Natural killer cell (primary cell): ENCODE measurements at regions of chr15 and their contacts with region 1.

Region 1: GRCh38 chr15:53009093-53009492 is 219.0 kb upstream of the ONECUT1 start:
- DNase-seq: no peak
- ATAC-seq: no peak
- H3K4me3 ChIP-seq: no peak overlapping the region
- H3K4me3 Mint-ChIP-seq: no peak overlapping the region
- H3K27ac ChIP-seq: no peak overlapping the region
- H3K27ac Mint-ChIP-seq: no peak overlapping the region
- H3K4me1 ChIP-seq: no peaks in the 10 kb centered on the region
- H3K4me1 Mint-ChIP-seq: no peaks in the 10 kb centered on the region
- H3K27me3 ChIP-seq: no peaks in the 10 kb centered on the region
- H3K27me3 Mint-ChIP-seq: peaks cover 0 to 4% of the 10 kb centered on the region in 2 donors
- CTCF ChIP-seq: no peak

Region 2: DNA sequence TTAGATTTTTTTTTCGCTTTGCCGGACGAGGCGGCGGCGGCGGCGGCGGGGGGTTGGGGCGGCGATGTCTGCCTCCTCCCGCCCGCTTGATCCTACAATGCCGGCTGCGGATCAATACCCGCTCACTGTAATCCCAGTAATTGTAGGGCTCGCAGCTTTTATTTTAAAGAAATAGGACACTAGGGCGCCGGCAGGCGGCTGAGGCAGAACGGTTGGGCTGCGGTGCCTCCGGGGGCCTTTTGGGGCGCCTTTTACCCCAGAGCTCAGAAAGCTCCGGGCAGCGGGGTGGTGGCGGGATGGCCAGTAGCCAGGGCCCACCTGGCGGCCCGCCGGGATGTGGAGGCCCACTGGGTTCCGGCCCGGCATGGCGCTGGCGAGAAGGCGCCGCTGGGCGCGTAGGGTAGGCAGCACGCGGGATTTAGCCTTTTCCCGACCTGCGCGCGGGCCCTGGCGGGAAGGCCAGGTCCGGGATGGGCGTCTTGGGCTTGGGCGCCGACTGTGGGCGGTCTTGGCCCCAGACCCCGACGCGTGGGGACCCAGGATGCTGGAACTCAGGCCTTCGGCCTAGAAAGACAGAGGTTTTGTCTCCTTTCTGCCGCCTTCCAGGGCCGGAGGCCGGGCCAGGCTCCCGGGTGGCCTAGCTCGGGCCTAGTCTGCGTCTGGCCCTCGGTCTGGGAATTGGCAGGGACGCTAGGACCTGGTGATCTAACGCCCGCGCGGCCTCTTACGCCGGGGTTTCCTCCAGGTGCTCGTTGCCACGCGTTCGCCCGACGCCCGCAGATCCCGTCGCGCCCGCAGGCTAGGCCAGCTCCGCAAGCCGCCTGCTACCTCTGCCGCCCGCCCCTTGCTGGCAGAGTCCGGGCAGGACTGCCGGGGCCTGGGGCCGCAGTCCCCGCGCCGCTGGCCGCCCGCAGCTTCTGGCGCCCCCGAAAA is 203.5 kb before region 1 on chr15:
- intact Hi-C with region 1: no loop called
- DNase-seq: peak in 1 of 2 donors; percentile 25
- ATAC-seq: peak in 1 of 3 donors; percentile 46
- H3K4me3 ChIP-seq: no peak overlapping the region
- H3K4me3 Mint-ChIP-seq: peak overlapping the region; percentile 75
- H3K27ac ChIP-seq: no peak overlapping the region
- H3K27ac Mint-ChIP-seq: no peak overlapping the region
- H3K4me1 ChIP-seq: peaks cover 30% of the 10 kb centered on the region
- H3K4me1 Mint-ChIP-seq: peaks cover 12 to 13% of the 10 kb centered on the region in 2 donors
- H3K27me3 ChIP-seq: peaks cover 70% of the 10 kb centered on the region
- H3K27me3 Mint-ChIP-seq: peaks cover 61 to 81% of the 10 kb centered on the region in 2 donors
- CTCF ChIP-seq: no peak

Region 3: GRCh38 chr15:52994290-52994689 is 14.8 kb before region 1 on chr15:
- intact Hi-C with region 1: loop called (anchors 2 kb)
- DNase-seq: no peak
- ATAC-seq: no peak
- H3K4me3 ChIP-seq: no peak overlapping the region
- H3K4me3 Mint-ChIP-seq: no peak overlapping the region
- H3K27ac ChIP-seq: no peak overlapping the region
- H3K27ac Mint-ChIP-seq: no peak overlapping the region
- H3K4me1 ChIP-seq: no peaks in the 10 kb centered on the region
- H3K4me1 Mint-ChIP-seq: no peaks in the 10 kb centered on the region
- H3K27me3 ChIP-seq: no peaks in the 10 kb centered on the region
- H3K27me3 Mint-ChIP-seq: no peaks in the 10 kb centered on the region
- CTCF ChIP-seq: no peak